Activated naive CD4-positive, alpha-beta T cell treated with anti-CD3 and anti-CD28 coated beads, Interleukin-2, amount 10 ng/mL, durations not matched to agents 7 days and 5 days (primary cell): ENCODE measurements at regions of chr11 and their contacts with region 1.

Region 1: GRCh38 chr11:65111744-65112414 is at the start of gene TM7SF2:
- DNase-seq: peak; percentile 98
- H3K4me3 Mint-ChIP-seq: peak within 1 kb of the TSS; percentile 87
- H3K27ac Mint-ChIP-seq: peak within 1 kb of the TSS; percentile 92
- H3K4me1 Mint-ChIP-seq: peaks cover 53% of the 10 kb centered on the region
- H3K27me3 Mint-ChIP-seq: peaks cover 4% of the 10 kb centered on the region

Region 2: DNA sequence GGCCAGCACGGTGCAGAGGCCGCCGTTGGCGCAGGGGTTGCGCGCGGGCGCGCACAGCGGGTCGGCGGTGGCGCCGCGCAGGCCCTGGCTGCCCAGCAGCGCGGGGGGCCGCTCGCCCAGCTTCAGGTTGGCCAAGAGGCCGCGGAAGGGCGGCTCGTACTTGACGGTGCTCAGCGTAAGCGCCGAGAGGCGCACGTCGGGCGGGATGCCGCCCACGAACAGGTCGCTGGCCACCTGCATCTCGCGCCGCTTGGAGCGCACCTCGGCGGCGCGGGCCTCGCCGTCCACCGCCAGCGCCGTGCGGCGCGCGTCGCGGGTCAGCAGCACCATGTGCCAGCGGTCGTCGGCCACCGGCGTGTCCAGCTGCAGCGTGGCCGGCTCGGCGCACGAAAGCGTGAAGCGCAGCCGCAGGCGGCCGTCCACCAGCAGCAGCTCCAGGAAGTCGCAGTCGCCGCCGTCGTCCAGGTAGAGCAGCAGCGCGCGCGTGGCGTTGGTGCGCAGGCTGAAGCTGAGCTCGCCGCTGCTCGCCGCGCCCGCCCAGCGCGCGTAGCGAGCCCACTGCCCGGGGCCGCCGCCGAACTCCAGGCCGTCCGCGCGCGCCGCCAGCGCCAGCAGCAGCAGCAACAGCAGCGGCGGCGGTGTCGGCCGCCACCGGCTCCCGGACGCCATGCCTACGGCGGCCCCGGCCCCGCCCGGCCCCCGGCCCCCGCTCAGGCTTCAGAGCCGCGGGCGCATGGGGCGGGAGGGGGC is 398.7 kb before region 1 on chr11:
- CTCF ChIA-PET with region 1: no interaction called
- DNase-seq: peak; percentile 50
- H3K4me3 Mint-ChIP-seq: no peak overlapping the region
- H3K27ac Mint-ChIP-seq: no peak overlapping the region
- H3K4me1 Mint-ChIP-seq: peaks cover 19% of the 10 kb centered on the region
- H3K27me3 Mint-ChIP-seq: peaks cover 92% of the 10 kb centered on the region

Region 3: DNA sequence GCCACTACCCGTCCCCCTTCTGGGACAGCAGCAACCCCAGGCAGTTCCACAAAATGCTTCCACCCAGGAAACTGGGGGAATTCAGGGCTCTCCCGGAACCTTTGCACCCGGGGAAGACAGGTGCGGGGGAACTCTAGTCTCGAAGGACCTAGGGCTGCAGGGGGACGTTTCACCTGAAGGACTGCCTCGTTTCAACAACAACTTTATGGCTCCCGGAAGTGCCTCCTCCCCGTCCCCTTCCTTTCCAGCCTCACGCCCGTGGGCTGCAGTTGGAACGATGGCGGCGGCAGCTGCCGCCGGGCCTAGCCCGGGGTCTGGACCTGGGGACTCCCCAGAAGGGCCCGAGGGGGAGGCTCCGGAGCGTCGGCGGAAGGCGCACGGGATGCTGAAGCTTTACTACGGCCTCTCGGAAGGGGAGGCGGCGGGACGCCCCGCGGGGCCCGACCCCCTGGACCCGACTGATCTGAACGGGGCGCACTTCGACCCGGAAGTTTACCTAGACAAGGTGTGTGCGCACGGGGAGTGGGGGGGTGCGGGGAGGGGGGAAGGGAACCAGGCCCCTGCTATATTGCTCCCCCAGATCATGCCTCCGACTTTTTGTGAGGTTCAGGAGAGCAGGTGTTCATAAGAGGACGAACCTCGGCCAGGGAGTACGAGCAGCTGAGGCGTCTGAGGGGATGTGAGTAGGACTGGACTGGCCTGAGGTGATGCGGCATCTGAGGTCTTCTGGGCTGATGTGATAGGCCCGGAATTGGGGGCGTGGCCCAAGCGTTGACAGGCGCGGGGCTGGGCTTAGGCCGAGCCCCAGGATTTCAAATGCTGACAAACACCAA is 15.7 kb before region 1 on chr11 and contains the start of gene VPS51:
- CTCF ChIA-PET with region 1: interaction called, 60 read pairs
- DNase-seq: peak; percentile 93
- H3K4me3 Mint-ChIP-seq: peak within 1 kb of the TSS; percentile 92
- H3K27ac Mint-ChIP-seq: peak within 1 kb of the TSS; percentile 98
- H3K4me1 Mint-ChIP-seq: peaks cover 22% of the 10 kb centered on the region
- H3K27me3 Mint-ChIP-seq: no peaks in the 10 kb centered on the region

Region 4: GRCh38 chr11:65180877-65181568 is 69.1 kb after region 1 on chr11:
- CTCF ChIA-PET with region 1: interaction called, 20 read pairs
- DNase-seq: peak; percentile 73
- H3K4me3 Mint-ChIP-seq: peak overlapping the region; percentile 86
- H3K27ac Mint-ChIP-seq: peak overlapping the region; percentile 62
- H3K4me1 Mint-ChIP-seq: peaks cover 28% of the 10 kb centered on the region
- H3K27me3 Mint-ChIP-seq: peaks cover 18% of the 10 kb centered on the region

Region 5: GRCh38 chr11:65274735-65275682 is 163.1 kb after region 1 on chr11:
- CTCF ChIA-PET with region 1: no interaction called
- DNase-seq: peak; percentile 58
- H3K4me3 Mint-ChIP-seq: no peak overlapping the region
- H3K27ac Mint-ChIP-seq: no peak overlapping the region
- H3K4me1 Mint-ChIP-seq: peaks cover 2% of the 10 kb centered on the region
- H3K27me3 Mint-ChIP-seq: no peaks in the 10 kb centered on the region